Motor neuron (in vitro differentiated cells): ENCODE measurements at regions of chr9 and their contacts with region 1.

Region 1: DNA sequence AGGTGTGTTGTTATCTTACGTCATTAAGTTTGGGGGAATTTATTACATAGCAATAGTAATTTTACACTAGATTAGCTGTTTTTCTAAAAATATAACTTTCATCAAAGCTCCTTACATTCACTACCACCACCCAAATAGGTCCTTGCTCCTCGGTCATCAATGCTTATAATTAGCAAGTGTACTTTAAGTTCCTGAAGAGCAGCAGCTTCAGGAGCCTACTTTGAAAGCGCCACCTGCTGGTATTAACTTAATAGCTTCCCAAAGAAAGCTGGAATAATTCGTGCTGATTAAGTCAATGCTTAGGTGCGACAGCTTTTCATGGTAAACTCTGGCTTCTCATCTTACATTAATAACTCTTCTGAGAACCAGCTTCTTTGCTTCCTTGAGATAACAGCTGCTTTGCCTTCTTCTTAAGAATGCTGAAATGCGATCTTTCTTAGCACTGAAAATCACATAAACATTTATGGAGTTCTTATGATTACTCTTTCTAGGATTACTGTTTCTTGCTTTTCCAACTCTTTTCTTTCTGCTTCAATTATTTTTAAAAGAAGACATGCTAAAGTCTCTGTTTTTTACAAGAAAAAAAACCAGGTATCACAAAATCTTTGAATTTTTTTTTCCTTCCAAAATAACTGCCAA is 10.0 kb upstream of the C5 start:
- ATAC-seq: peak in 4 of 8 experiments; percentile 42 to 70 (median 62)
- H3K4me3 ChIP-seq: no peak overlapping the region
- H3K27ac ChIP-seq: no peak overlapping the region
- H3K4me1 ChIP-seq: no peaks in the 10 kb centered on the region

Region 2: DNA sequence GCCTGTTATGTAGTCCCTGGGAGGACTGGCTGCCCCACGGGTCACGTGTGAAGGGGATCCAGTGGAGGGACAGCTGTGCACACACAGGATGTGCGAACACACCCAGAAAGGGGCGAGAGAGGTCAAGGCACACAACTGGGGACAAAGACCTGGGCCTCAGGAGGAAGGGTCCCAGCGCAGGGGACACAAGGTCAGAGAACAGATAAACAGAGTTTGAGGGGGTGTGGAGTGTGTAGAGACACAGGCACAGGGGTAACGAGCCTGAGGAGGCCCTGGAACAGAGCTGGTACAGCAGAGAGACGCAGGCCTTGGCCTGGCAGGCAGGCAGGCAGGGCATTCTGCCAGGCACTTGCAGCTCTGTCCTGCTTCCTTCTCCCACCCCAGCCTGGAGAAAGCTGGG is 202.6 kb before region 1 on chr9:
- in situ Hi-C with region 1: no loop called
- ATAC-seq: peak in 2 of 8 experiments; percentile 6 to 19
- H3K4me3 ChIP-seq: no peak overlapping the region
- H3K27ac ChIP-seq: peak overlapping the region in 1 of 2 donors; percentile 13
- H3K4me1 ChIP-seq: peaks cover 0 to 13% of the 10 kb centered on the region in 2 donors

Region 3: GRCh38 chr9:120892748-120893610 is 167.1 kb before region 1 on chr9:
- in situ Hi-C with region 1: no loop called
- ATAC-seq: no peak
- H3K4me3 ChIP-seq: no peak overlapping the region
- H3K27ac ChIP-seq: peak overlapping the region; percentile 43 to 75
- H3K4me1 ChIP-seq: peaks cover 8 to 12% of the 10 kb centered on the region in 2 donors

Region 4: DNA sequence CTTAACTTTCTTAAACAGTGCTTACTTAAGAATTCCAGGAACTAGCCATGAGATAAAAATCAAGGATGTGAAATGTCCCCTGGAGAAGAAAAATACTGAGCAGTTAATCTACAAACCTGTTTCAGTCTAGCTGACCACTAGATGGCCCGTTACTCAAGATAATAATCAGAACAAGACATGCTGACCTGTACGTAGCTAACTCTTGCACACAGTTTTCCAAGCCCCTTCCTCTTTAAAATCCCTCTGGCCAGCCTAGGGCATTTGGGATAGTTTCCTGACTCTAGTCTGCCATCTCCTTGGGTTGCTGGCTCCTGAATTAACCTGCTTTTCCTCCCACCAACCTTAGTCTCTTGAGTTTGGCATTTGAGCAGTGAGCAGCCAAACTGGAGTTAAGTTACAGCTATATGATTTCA is 74.3 kb before region 1 on chr9:
- in situ Hi-C with region 1: loop called in 1 of 9 experiments (anchors 10 kb)
- ATAC-seq: peak; percentile 44 to 95 (median 71)
- H3K4me3 ChIP-seq: no peak overlapping the region
- H3K27ac ChIP-seq: no peak overlapping the region
- H3K4me1 ChIP-seq: no peaks in the 10 kb centered on the region